Ascending aorta (tissue), 2 donors: ENCODE measurements at regions of chr6 and their contacts with region 1.

Region 1: DNA sequence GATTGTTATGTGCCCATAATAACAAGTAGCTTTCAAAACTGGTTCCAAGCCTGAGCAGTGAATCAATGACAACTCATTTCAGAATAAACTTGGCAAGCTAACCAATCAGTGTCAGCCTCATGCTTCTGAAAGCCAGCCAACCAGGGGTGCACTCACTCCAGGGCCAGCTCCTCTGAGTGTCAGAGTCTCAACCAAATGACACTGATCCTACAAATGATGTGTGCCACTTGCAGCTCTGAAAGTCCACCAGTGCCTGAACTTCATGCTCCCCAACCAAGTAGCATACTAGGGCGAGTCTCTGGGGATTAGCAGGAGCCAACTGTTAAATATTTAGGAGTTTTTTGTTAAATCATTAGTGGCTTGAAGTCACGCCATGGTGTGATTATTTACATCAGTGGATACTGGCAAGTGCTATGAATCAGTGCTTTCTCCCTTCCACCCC is 4.5 kb downstream of the IYD start:
- DNase-seq: peak in 1 of 2 donors; percentile 81
- H3K4me3 ChIP-seq: no peak overlapping the region
- H3K27ac ChIP-seq: peak overlapping the region in 1 of 2 donors; percentile 7
- H3K4me1 ChIP-seq: peaks cover 0 to 3% of the 10 kb centered on the region in 2 donors
- H3K27me3 ChIP-seq: no peaks in the 10 kb centered on the region
- CTCF ChIP-seq: no peak

Region 2: DNA sequence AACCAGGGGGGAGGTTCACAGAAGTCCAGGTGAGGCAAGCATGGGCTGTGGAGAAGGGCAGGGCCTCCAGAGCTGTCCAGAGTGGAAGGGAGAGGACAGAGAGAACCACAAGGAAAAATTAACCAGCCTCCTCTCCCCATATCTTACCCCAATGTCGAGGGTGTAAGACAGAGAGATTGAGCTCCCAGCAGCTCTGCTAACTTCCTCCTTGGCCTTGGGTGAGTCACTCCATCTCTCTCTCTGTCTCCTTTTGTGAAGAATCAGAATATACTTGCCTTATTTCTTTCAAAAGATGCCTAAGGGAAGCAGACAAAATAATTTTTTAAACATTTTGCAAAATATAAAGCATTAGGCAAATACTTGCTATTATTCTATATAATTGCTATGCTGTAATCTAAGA is 62.7 kb before region 1 on chr6:
- intact Hi-C with region 1: no loop called
- DNase-seq: no peak
- H3K4me3 ChIP-seq: no peak overlapping the region
- H3K27ac ChIP-seq: no peak overlapping the region
- H3K4me1 ChIP-seq: no peaks in the 10 kb centered on the region
- H3K27me3 ChIP-seq: no peaks in the 10 kb centered on the region
- CTCF ChIP-seq: no peak

Region 3: DNA sequence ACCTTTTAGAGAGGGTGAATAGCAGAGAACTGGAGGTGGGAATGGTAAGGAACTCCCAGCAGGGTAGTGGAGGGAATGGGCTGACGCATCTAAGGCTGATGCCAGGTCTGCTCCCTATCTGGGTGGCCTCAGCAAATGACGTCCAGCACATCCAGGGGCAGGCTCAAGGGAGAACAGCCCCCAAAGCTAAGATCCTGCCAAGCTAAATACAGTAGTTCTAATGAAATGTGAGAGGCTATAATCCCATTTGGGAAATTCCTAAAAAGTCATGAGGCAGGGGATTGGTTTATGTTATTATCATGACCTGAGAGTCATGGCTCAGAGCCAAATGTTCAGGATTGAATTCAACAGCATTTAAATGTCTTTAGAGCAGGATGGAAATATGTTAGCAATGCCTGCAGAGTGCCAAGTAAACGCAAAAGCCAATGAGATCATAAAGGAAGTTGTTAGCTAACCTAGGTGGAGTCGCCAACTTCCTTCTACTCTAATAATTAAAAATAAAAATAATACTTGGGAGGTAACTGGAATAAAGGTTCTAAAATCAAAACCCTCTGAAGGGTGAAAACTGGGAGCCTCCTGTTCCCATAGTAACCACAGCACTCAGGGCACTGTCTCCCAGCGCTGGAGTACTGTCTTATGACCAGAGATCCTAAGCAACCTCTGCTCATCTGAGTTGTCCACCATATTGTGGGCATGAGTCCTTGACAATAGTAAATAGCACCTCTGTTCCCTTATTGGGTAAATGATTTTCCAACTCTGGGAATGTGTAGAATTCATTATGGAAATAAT is 30.4 kb after region 1 on chr6:
- intact Hi-C with region 1: loop called (anchors 2 kb)
- DNase-seq: peak in 1 of 2 donors; percentile 83
- H3K4me3 ChIP-seq: no peak overlapping the region
- H3K27ac ChIP-seq: peak overlapping the region; percentile 5 to 19
- H3K4me1 ChIP-seq: peaks cover 7 to 10% of the 10 kb centered on the region in 2 donors
- H3K27me3 ChIP-seq: no peaks in the 10 kb centered on the region
- CTCF ChIP-seq: no peak